Naive thymus-derived CD4-positive, alpha-beta T cell (primary cell): ENCODE measurements at regions of chr6 and their contacts with region 1.

Region 1: DNA sequence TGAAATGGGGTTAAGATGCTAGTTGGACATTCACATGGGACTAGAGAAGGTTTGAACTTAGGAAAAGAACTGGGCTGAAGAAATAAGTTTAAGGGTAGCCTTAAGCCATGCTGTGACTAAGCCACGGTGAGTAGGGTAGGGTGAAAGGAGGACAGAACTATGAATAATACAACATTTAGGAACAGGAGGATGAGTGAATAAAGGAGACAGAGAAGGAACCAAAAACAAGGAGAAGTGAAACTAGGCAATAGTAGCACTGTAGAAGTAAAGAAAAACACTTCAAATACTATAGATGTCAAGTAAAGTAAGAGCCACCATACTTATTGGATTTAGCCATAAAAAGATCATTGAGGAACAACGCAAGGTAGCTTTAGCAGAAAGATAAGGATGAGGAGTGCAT is 111.2 kb downstream of the KCNQ5 start:
- DNase-seq: no peak
- ATAC-seq: peak; percentile 52
- H3K4me3 ChIP-seq: no peak overlapping the region
- H3K4me3 Mint-ChIP-seq: no peak overlapping the region
- H3K27ac ChIP-seq: no peak overlapping the region
- H3K27ac Mint-ChIP-seq: no peak overlapping the region
- H3K4me1 ChIP-seq: no peaks in the 10 kb centered on the region
- H3K4me1 Mint-ChIP-seq: peaks cover 0 to 5% (median 4%) of the 10 kb centered on the region in 7 donors
- H3K27me3 ChIP-seq: no peaks in the 10 kb centered on the region
- H3K27me3 Mint-ChIP-seq: no peaks in the 10 kb centered on the region

Region 2: GRCh38 chr6:72151742-72152141 is 581.3 kb before region 1 on chr6:
- CTCF ChIA-PET with region 1: no interaction called
- POLR2A ChIA-PET with region 1: no interaction called
- intact Hi-C with region 1: no loop called
- DNase-seq: no peak
- ATAC-seq: no peak
- H3K4me3 ChIP-seq: no peak overlapping the region
- H3K4me3 Mint-ChIP-seq: no peak overlapping the region
- H3K27ac ChIP-seq: no peak overlapping the region
- H3K27ac Mint-ChIP-seq: no peak overlapping the region
- H3K4me1 ChIP-seq: no peaks in the 10 kb centered on the region
- H3K4me1 Mint-ChIP-seq: no peaks in the 10 kb centered on the region
- H3K27me3 ChIP-seq: no peaks in the 10 kb centered on the region
- H3K27me3 Mint-ChIP-seq: no peaks in the 10 kb centered on the region

Region 3: DNA sequence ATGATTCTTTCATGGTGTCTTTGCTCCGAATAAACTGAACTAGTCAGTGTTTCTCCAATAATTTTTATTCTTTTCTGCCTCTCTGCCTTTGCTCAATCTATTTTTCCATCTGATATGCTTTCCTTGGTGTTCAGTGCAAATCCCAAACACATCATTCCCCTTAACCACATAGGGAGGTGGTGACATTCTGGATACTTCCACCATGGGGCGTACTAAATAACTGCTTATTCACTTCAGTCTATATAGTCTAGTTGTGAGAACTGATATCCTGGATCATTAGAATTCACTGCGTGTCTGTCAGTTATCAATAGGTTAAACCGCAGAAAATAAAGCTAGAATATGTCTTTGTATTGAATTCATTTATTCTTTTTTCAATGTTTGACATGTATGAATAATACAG is 28.1 kb before region 1 on chr6:
- CTCF ChIA-PET with region 1: no interaction called
- POLR2A ChIA-PET with region 1: interaction called, 7 read pairs
- intact Hi-C with region 1: loop called in 1 of 2 experiments (anchors 1 kb)
- DNase-seq: no peak
- ATAC-seq: no peak
- H3K4me3 ChIP-seq: no peak overlapping the region
- H3K4me3 Mint-ChIP-seq: no peak overlapping the region
- H3K27ac ChIP-seq: no peak overlapping the region
- H3K27ac Mint-ChIP-seq: peak overlapping the region in 1 of 9 donors; percentile 6
- H3K4me1 ChIP-seq: no peaks in the 10 kb centered on the region
- H3K4me1 Mint-ChIP-seq: peaks cover 0 to 8% (median 0%) of the 10 kb centered on the region in 7 donors
- H3K27me3 ChIP-seq: no peaks in the 10 kb centered on the region
- H3K27me3 Mint-ChIP-seq: no peaks in the 10 kb centered on the region

Region 4: DNA sequence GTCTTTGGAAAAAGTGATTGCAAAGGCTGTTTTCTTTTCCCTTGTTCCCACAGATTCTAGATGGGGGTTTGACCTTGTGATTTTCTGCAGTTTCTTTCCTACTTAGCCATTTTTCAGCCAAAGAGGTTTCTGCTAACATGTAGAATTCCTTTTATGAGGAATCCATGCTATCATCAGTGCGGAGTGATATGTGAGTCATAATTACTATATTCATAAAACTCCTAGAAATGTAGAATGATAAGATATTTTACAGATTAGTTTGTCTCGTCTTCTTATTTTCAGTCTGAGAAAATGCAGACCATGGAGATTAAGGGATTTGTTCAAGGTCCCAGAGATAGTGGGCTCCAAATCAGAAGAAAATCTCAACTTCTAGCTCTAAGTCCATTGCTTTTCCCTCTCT is 12.6 kb before region 1 on chr6:
- CTCF ChIA-PET with region 1: no interaction called
- POLR2A ChIA-PET with region 1: no interaction called
- intact Hi-C with region 1: no loop called
- DNase-seq: no peak
- ATAC-seq: no peak
- H3K4me3 ChIP-seq: no peak overlapping the region
- H3K4me3 Mint-ChIP-seq: no peak overlapping the region
- H3K27ac ChIP-seq: no peak overlapping the region
- H3K27ac Mint-ChIP-seq: no peak overlapping the region
- H3K4me1 ChIP-seq: no peaks in the 10 kb centered on the region
- H3K4me1 Mint-ChIP-seq: peaks cover 0 to 3% (median 0%) of the 10 kb centered on the region in 7 donors
- H3K27me3 ChIP-seq: no peaks in the 10 kb centered on the region
- H3K27me3 Mint-ChIP-seq: no peaks in the 10 kb centered on the region

Region 5: DNA sequence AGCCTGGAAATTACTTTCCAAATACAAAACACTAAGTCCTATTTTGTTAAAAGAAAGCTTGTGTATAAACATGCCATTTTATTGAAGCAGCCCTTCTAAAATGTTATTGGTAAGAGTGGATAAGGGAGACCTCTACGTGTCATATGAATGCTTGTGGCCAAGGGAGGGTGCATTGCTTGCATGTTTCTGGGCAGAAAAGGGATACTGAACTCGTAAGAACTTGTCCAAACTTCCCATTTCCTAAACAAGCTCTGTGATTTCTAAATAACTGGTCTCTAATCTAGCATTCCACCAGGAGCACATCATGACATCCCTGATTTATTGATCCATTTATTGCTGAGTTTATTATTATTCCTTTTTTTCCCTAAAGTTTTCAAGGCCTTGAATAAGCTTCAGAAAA is 1437.1 kb after region 1 on chr6:
- CTCF ChIA-PET with region 1: no interaction called
- POLR2A ChIA-PET with region 1: no interaction called
- intact Hi-C with region 1: no loop called
- DNase-seq: no peak
- ATAC-seq: no peak
- H3K4me3 ChIP-seq: no peak overlapping the region
- H3K4me3 Mint-ChIP-seq: no peak overlapping the region
- H3K27ac ChIP-seq: no peak overlapping the region
- H3K27ac Mint-ChIP-seq: no peak overlapping the region
- H3K4me1 ChIP-seq: no peaks in the 10 kb centered on the region
- H3K4me1 Mint-ChIP-seq: no peaks in the 10 kb centered on the region
- H3K27me3 ChIP-seq: no peaks in the 10 kb centered on the region
- H3K27me3 Mint-ChIP-seq: no peaks in the 10 kb centered on the region